Activated naive CD8-positive, alpha-beta T cell treated with anti-CD3 and anti-CD28 coated beads, Interleukin-2, amount 10 ng/mL, durations not matched to agents 7 days and 5 days (primary cell): ENCODE measurements at regions of chr15 and their contacts with region 1.

Region 1: GRCh38 chr15:74937596-74938296 is at the start of gene COX5A:
- DNase-seq: peak; percentile 95
- ATAC-seq: peak; percentile 95
- H3K4me3 Mint-ChIP-seq: peak within 1 kb of the TSS; percentile 97
- H3K27ac Mint-ChIP-seq: peak within 1 kb of the TSS; percentile 91
- H3K4me1 Mint-ChIP-seq: peaks cover 21% of the 10 kb centered on the region
- H3K27me3 Mint-ChIP-seq: no peaks in the 10 kb centered on the region
- total RNA-seq, gene COX5A: 220 to 222 TPM

Region 2: DNA sequence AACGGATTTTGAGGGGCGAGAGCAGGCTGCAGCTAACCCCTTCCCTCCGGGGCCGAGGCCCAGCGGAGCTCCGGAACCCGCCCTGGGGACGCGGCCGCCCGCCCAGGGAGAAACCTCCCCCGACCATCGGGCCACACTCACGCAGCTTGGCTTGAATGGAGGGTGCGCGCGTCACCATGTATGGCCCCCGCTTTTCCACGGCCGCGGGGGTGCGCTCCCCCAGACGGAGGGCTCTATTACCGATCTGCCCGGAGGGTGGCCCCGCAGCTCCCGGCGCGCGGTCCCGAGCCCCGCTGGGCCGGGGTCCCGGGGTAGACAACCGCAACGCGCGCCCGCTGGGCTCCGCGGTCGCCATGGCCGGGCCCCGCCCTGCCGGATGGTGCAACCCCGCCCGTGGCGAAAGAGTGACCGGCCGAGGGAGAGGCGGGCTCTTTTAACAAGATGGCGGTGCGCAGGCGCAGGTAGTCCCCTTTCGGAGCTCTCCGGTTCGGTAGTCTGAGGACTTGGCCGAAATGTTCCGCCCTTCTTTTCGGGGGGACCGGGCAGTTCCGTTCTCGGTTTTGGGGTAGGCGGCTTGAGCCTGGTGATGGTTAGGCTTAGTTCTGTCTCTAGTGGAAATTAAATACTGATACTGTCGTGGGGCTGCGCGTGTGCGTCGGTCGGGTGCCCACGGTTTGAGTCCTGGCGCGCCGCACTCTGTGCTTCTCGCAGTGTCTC is 31.1 kb before region 1 on chr15 and contains the start of gene FAM219B:
- POLR2A ChIA-PET with region 1: interaction called, 12 read pairs
- DNase-seq: peak; percentile 84
- ATAC-seq: peak; percentile 86
- H3K4me3 Mint-ChIP-seq: peak within 1 kb of the TSS; percentile 92
- H3K27ac Mint-ChIP-seq: peak within 1 kb of the TSS; percentile 84
- H3K4me1 Mint-ChIP-seq: peaks cover 26% of the 10 kb centered on the region
- H3K27me3 Mint-ChIP-seq: no peaks in the 10 kb centered on the region
- total RNA-seq, gene FAM219B: 90.3 to 113 TPM

Region 3: DNA sequence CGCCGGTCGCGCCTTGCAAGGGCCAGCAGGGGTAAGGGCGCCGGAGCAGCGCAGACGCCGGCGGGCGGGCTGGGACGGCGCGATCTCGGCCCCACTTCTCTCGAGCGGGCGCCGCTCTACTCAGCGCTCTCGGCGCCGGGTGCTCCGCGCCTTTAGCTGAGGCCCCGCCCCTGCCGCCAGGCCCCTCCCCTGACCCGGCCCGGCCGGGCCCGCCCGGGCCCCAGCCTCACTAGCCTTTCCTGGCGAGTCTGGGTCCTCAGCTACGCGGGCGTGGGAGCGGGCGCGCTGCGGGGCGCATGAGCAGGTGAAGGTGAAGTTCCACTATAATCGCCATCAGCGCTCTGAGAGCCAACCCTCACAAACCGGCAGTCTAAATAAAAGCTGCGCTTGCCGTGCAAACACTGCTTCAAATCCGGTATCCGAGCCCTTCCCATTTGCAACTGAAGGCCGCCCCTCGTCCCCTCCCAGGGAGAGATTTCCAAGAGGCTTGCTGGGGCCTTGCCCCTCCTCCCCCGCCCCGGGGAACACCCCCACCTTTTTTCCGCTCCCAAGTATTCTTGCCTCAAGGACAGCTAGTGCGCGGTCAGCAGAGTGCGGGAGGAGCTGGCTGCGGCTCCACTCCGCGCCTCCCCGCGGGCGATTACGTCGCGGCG is 19.0 kb after region 1 on chr15 and contains the start of gene RPP25:
- POLR2A ChIA-PET with region 1: no interaction called
- DNase-seq: peak; percentile 86
- ATAC-seq: peak; percentile 93
- H3K4me3 Mint-ChIP-seq: peak within 1 kb of the TSS; percentile 73
- H3K27ac Mint-ChIP-seq: no peak within 1 kb of the TSS
- H3K4me1 Mint-ChIP-seq: peaks cover 29% of the 10 kb centered on the region
- H3K27me3 Mint-ChIP-seq: peaks cover 42% of the 10 kb centered on the region
- total RNA-seq, gene RPP25: 3.5 to 4.2 TPM

Region 4: GRCh38 chr15:75016431-75016830 is 78.7 kb after region 1 on chr15:
- POLR2A ChIA-PET with region 1: no interaction called
- DNase-seq: no peak
- ATAC-seq: no peak
- H3K4me3 Mint-ChIP-seq: no peak overlapping the region
- H3K27ac Mint-ChIP-seq: no peak overlapping the region
- H3K4me1 Mint-ChIP-seq: no peaks in the 10 kb centered on the region
- H3K27me3 Mint-ChIP-seq: peaks cover 2% of the 10 kb centered on the region